Activated CD8-positive, alpha-beta T cell treated with anti-CD3 and anti-CD28 coated beads, Interleukin-2, amount 10 ng/mL, durations not matched to agents 7 days and 5 days (primary cell): ENCODE measurements at regions of chr17 and their contacts with region 1.

Region 1: GRCh38 chr17:2094891-2095535 is 40.1 kb downstream of the HIC1 start:
- DNase-seq: no peak
- ATAC-seq: no peak
- H3K4me3 Mint-ChIP-seq: no peak overlapping the region
- H3K27ac Mint-ChIP-seq: no peak overlapping the region
- H3K4me1 Mint-ChIP-seq: peaks cover 45% of the 10 kb centered on the region
- H3K27me3 Mint-ChIP-seq: no peaks in the 10 kb centered on the region

Region 2: DNA sequence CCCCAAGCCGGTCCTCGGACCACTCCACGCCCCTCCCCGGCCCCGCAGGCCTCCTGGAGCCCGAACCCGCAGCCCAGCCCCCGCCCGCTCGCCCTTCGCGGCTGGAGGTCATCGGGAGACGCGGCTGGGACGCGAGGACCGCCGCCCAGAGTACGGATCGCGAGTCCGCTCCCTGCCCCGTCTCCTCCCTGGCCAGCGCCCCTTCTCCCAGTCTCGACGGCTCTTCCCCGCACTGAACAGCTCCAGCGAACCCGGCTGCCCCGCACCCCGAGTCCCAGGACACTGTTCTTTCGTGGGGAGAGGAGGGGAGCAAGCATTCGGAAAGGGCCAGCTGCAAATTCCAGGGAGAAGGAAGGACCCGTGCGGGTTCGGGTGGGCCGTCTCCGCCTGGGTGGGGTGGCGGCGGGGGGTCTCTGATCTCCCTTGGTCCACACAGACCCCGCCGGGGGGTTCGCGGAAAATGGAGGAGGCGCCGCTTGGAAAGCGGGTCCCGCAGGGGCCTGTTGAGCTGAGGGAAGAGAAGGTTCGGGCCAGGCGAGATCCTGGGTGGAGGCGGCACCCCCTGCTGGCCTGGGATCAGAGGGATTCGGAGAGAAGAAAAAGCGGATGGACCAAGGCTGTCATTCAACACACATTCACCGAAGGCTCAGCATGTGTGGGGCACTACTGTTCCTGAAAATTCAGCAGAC is 69.2 kb before region 1 on chr17:
- CTCF ChIA-PET with region 1: no interaction called
- POLR2A ChIA-PET with region 1: no interaction called
- DNase-seq: peak; percentile 41
- ATAC-seq: no peak
- H3K4me3 Mint-ChIP-seq: peak overlapping the region; percentile 66
- H3K27ac Mint-ChIP-seq: no peak overlapping the region
- H3K4me1 Mint-ChIP-seq: peaks cover 30% of the 10 kb centered on the region
- H3K27me3 Mint-ChIP-seq: peaks cover 55% of the 10 kb centered on the region

Region 3: DNA sequence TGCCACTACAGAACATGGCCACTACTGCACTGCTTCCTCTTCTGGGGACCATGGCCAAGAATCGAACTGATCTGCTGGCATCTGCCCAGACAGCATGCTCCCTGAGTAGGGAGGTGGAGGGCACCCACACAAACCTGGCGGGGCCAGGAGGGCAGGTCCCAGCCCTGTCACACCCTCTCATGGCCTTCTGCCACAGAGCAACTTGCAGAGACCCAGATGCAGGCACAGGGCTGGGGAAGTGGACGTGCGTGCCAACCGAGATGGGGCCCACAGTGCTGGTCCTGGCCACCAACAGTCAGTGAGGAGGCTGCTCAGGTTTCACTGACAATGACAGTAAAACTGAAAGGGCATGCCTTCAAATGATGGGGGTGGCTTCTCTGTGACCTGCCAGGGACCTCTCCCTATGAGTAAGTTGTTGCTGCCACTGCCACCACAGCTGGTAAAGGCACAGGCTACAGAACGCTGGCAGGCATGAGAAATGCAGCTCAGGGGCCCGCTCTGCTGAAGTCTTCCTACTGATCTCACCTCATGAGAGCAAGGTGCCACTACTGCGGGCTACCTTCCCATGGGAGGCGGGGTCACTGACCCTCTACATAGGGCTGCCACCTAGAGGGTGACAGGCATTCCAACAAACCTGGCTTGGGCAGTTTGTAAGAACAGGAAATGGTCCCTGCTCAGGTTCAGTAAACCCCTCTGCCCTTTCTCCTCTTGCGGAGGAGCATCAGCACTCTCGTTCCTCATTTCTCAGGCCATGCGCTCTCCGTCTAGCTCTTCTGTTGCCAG is 24.6 kb before region 1 on chr17:
- CTCF ChIA-PET with region 1: interaction called, 47 read pairs
- POLR2A ChIA-PET with region 1: interaction called, 13 read pairs
- DNase-seq: peak; percentile 78
- ATAC-seq: peak; percentile 82
- H3K4me3 Mint-ChIP-seq: peak overlapping the region; percentile 16
- H3K27ac Mint-ChIP-seq: peak overlapping the region; percentile 84
- H3K4me1 Mint-ChIP-seq: peaks cover 67% of the 10 kb centered on the region
- H3K27me3 Mint-ChIP-seq: no peaks in the 10 kb centered on the region

Region 4: GRCh38 chr17:2107506-2107905 is 12.5 kb after region 1 on chr17:
- CTCF ChIA-PET with region 1: interaction called, 13 read pairs
- POLR2A ChIA-PET with region 1: interaction called, 5 read pairs
- DNase-seq: no peak
- ATAC-seq: no peak
- H3K4me3 Mint-ChIP-seq: no peak overlapping the region
- H3K27ac Mint-ChIP-seq: no peak overlapping the region
- H3K4me1 Mint-ChIP-seq: peaks cover 40% of the 10 kb centered on the region
- H3K27me3 Mint-ChIP-seq: no peaks in the 10 kb centered on the region